Activated CD4-positive, alpha-beta T cell treated with anti-CD3 and anti-CD28 coated beads, Interleukin-2, amount 10 ng/mL, durations not matched to agents 24 days and 14 days (primary cell): ENCODE measurements at regions of chr10 and their contacts with region 1.

Region 1: DNA sequence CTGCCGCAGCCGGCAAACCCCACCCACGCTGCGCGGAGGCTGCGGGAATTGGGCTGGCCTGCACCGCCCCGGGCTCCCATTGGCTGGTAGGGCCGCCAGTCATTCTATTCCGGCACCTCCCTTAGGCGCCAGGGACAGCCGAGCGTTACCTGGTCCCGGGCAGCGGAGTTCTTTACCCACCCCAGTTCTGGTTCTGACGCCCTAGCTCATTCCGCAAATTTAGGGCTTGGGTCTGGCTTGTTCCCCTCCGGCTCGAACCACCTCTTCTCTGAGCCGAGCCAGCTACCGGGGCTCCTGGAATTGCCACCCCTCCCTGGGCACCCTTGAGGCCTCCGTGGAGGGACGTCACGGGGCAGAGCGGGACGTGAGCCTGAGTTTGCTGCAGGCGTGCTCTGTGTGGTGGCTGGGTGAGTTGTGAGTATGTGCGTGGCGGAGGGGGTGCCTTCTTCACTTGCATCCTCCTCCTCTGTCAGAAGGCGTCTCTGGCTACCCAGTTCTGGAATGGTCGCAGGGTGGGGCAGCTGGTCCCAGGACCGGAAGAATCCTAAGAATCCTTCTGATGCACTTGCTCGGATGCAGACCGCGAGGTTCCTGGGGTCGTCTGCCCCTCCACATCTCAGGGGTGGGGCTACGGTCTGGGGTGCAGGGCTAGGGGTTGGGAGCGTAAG is at the starts of genes PDZD7 and SFXN3:
- DNase-seq: peak; percentile 99
- H3K4me3 Mint-ChIP-seq: peak within 1 kb of the TSS; percentile 91
- H3K27ac Mint-ChIP-seq: peak within 1 kb of the TSS; percentile 91
- H3K4me1 Mint-ChIP-seq: peaks cover 26% of the 10 kb centered on the region
- H3K27me3 Mint-ChIP-seq: peaks cover 24% of the 10 kb centered on the region
- total RNA-seq, gene PDZD7: 0.38 and 0.93 TPM in 2 replicates
- total RNA-seq, gene SFXN3: 36.0 and 37.3 TPM in 2 replicates

Region 2: GRCh38 chr10:100912605-100913469 is 118.4 kb before region 1 on chr10 and contains the start of gene SLF2:
- intact Hi-C with region 1: loop called (anchors 5 kb)
- DNase-seq: peak; percentile 98
- H3K4me3 Mint-ChIP-seq: peak within 1 kb of the TSS; percentile 99
- H3K27ac Mint-ChIP-seq: peak within 1 kb of the TSS; percentile 98
- H3K4me1 Mint-ChIP-seq: peaks cover 40% of the 10 kb centered on the region
- H3K27me3 Mint-ChIP-seq: no peaks in the 10 kb centered on the region
- total RNA-seq, gene SLF2: 34.9 and 35.3 TPM in 2 replicates

Region 3: GRCh38 chr10:100989088-100989487 is 42.2 kb before region 1 on chr10:
- intact Hi-C with region 1: no loop called
- DNase-seq: no peak
- H3K4me3 Mint-ChIP-seq: peak overlapping the region; percentile 95
- H3K27ac Mint-ChIP-seq: no peak overlapping the region
- H3K4me1 Mint-ChIP-seq: peaks cover 27% of the 10 kb centered on the region
- H3K27me3 Mint-ChIP-seq: no peaks in the 10 kb centered on the region

Region 4: DNA sequence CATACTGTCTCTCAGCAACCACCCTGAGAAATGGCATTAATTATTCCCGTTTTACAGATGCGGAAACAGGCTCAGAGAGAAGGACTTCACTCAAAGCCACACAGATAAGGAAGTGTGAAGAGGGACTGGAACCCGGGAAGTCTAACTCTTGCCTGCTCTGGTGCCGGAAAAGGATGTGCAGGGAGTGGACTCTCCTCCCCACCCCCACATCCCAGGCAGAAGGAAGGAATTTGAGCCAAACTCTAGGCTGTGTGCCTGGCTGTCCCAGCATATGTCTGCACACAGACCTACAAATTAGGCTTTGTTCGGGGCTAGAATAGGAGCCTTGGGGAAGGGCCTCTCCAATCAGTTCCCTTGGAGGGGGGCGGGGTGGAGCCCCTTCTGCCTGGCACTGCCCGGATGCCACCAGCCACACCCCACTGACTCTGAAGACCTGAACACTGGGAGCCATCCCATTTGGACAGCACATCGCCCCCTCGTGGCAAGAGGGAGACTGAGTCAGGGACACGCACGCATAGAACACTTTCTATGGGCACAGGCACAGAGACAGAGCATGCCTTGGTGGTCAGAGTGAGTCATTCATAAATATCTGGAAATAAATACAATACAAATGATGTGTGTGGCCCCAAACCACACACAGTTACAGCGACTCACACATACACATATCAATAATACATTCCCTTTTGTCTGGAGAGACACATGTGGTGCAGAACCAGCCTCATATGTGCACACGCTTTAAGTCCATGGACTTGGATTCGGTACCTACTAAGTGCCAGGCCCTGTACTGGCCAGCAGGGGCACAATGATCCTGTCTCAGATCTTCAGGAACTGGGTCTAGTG is 18.5 kb before region 1 on chr10:
- intact Hi-C with region 1: loop called (anchors 1 kb)
- DNase-seq: peak; percentile 92
- H3K4me3 Mint-ChIP-seq: no peak overlapping the region
- H3K27ac Mint-ChIP-seq: peak overlapping the region; percentile 81
- H3K4me1 Mint-ChIP-seq: peaks cover 26% of the 10 kb centered on the region
- H3K27me3 Mint-ChIP-seq: peaks cover 28% of the 10 kb centered on the region

Region 5: GRCh38 chr10:101042667-101043355 is 11.5 kb after region 1 on chr10:
- intact Hi-C with region 1: loop called (anchors 1 kb)
- DNase-seq: peak; percentile 96
- H3K4me3 Mint-ChIP-seq: peak overlapping the region; percentile 97
- H3K27ac Mint-ChIP-seq: peak overlapping the region; percentile 89
- H3K4me1 Mint-ChIP-seq: peaks cover 19% of the 10 kb centered on the region
- H3K27me3 Mint-ChIP-seq: peaks cover 32% of the 10 kb centered on the region

Region 6: GRCh38 chr10:101060036-101060950 is 29.0 kb after region 1 on chr10:
- intact Hi-C with region 1: loop called (anchors 1 kb)
- DNase-seq: peak; percentile 97
- H3K4me3 Mint-ChIP-seq: peak overlapping the region; percentile 84
- H3K27ac Mint-ChIP-seq: peak overlapping the region; percentile 96
- H3K4me1 Mint-ChIP-seq: peaks cover 33% of the 10 kb centered on the region
- H3K27me3 Mint-ChIP-seq: peaks cover 26% of the 10 kb centered on the region